Caco-2 (cell line): ENCODE measurements at regions of chr11 and their contacts with region 1.

Region 1: GRCh38 chr11:129815596-129816461 is at the start of gene TMEM45B:
- DNase-seq: peak; percentile 83 to 86
- H3K4me3 ChIP-seq: peak within 1 kb of the TSS; percentile 69
- H3K4me3 Mint-ChIP-seq: peak within 1 kb of the TSS; percentile 98
- H3K27ac Mint-ChIP-seq: peak within 1 kb of the TSS; percentile 97
- H3K4me1 ChIP-seq: peaks cover 25% of the 10 kb centered on the region
- H3K4me1 Mint-ChIP-seq: peaks cover 47% of the 10 kb centered on the region
- H3K27me3 ChIP-seq: no peaks in the 10 kb centered on the region
- H3K27me3 Mint-ChIP-seq: no peaks in the 10 kb centered on the region
- CTCF ChIP-seq: no peak
- total RNA-seq, gene TMEM45B: 58.2 and 60.0 TPM in 2 replicates

Region 2: DNA sequence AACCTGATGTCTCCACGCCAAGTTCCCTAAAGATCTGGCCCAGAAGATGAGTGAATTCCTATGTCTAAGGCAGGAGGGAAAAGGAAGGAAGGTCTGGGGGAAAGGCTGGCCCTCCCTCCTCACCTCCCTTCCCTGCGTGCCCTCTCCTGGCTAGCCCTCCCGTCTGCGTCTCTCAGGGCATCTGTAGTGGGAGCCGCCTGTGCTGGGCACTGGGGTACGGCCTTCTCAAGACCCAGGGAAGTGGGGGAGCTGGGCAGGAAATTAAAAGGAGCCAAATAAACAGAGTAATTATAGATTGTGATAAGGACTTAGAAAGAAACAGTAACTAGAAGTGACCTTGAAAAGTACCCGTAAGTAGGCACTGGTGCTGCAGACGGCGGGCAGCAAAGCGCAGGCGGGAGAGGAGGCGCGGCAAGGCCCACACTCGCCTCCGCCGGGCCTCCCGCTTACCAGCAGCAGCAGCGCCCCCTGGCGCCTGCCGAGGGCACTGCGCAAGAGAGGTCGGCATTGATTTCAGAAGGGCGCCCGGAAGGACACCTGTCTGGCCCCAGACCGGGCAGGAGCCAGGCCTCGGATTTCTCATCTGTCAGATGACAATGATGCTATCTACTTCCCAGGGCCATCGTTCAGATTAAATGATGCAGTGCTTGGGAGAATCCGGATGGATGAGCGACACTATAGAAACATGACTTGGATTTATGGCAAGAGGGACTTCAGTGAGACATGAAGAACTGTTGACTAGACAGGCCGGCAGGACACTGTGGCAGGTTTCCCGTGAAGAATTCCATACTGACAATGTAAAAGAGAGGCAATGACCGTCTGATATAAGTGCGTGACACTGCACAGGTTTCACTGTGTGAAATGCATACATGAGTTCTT is 956.0 kb before region 1 on chr11:
- CTCF ChIA-PET with region 1: no interaction called
- POLR2A ChIA-PET with region 1: no interaction called
- intact Hi-C with region 1: no loop called
- DNase-seq: peak; percentile 65 to 80
- H3K4me3 ChIP-seq: no peak overlapping the region
- H3K4me3 Mint-ChIP-seq: no peak overlapping the region
- H3K27ac Mint-ChIP-seq: no peak overlapping the region
- H3K4me1 ChIP-seq: no peaks in the 10 kb centered on the region
- H3K4me1 Mint-ChIP-seq: no peaks in the 10 kb centered on the region
- H3K27me3 ChIP-seq: peaks cover under 1% of the 10 kb centered on the region; the same call in 1 of the 2 replicates
- H3K27me3 Mint-ChIP-seq: peaks cover 34% of the 10 kb centered on the region
- CTCF ChIP-seq: peak; percentile 91 to 97

Region 3: GRCh38 chr11:129779342-129779741 is 36.5 kb before region 1 on chr11:
- CTCF ChIA-PET with region 1: interaction called, 8 read pairs
- POLR2A ChIA-PET with region 1: interaction called, 28 read pairs
- intact Hi-C with region 1: loop called (anchors 5 kb)
- DNase-seq: peak; percentile 76 to 79
- H3K4me3 ChIP-seq: peak overlapping the region; percentile 11; the same call in 1 of the 2 replicates
- H3K4me3 Mint-ChIP-seq: peak overlapping the region; percentile 71
- H3K27ac Mint-ChIP-seq: peak overlapping the region; percentile 90
- H3K4me1 ChIP-seq: peaks cover 33% of the 10 kb centered on the region
- H3K4me1 Mint-ChIP-seq: peaks cover 30% of the 10 kb centered on the region
- H3K27me3 ChIP-seq: no peaks in the 10 kb centered on the region
- H3K27me3 Mint-ChIP-seq: no peaks in the 10 kb centered on the region
- CTCF ChIP-seq: no peak

Region 4: DNA sequence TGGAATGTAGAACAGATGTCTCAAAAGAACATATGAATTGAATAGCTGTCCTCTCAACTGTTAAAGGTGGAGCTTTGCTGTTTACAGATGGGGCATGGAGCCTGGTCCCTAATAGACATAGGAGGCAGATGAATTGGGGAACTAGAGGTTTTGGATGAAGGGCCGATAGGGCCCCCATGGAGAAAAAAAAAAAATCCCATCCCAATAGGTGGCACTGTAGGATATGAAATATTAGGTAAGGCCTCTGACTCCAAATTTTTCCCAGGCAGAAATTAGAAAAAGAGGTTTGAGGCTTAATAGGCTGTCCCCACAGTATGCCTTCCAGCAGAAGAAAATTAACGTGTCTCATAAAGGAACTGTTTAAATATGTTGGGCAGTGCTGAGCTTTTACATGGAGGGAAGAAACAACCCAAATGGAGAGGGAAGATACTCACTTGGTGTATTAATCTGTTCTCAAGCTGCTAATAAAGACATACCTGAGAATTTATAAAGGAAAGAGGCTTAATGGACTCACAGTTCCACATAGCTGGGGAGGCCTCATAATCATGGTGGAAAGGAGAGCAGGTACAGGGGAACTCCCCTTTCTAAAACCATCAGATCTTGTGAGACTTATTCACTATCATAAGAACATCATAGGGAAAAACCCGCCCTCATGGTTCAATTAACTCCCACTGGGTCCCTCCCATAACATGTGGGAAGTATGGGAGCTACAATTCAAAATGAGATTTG is 30.3 kb before region 1 on chr11:
- CTCF ChIA-PET with region 1: interaction called, 4 read pairs
- POLR2A ChIA-PET with region 1: interaction called, 28 read pairs
- intact Hi-C with region 1: loop called (anchors 1 kb)
- DNase-seq: peak in 1 of 2 experiments; percentile 66
- H3K4me3 ChIP-seq: no peak overlapping the region
- H3K4me3 Mint-ChIP-seq: no peak overlapping the region
- H3K27ac Mint-ChIP-seq: peak overlapping the region; percentile 4
- H3K4me1 ChIP-seq: peaks cover 18% of the 10 kb centered on the region
- H3K4me1 Mint-ChIP-seq: peaks cover 18% of the 10 kb centered on the region
- H3K27me3 ChIP-seq: no peaks in the 10 kb centered on the region
- H3K27me3 Mint-ChIP-seq: no peaks in the 10 kb centered on the region
- CTCF ChIP-seq: peak; percentile 2 to 52

Region 5: DNA sequence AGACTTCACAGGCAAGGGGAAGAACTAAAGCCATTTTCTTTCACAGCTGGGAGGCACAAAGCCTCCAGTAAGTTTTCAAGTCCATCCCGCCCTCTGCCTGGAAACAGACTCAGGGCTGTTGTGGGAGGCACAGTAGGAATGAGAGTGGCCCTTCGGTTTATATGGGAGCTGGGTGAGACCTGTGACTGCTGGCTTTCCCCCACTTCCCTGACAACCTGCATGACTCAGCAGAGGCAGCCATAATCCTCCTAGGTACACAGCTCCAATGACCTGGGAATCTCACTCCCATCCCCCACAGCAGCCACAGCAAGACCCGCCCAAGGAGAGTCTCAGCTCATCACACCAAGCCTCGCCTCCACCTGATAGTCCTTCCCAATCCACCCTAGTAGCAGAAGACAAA is 12.3 kb before region 1 on chr11:
- CTCF ChIA-PET with region 1: interaction called, 6 read pairs
- POLR2A ChIA-PET with region 1: interaction called, 15 read pairs
- intact Hi-C with region 1: loop called (anchors 2 kb)
- DNase-seq: peak; percentile 69 to 92
- H3K4me3 ChIP-seq: no peak overlapping the region
- H3K4me3 Mint-ChIP-seq: peak overlapping the region; percentile 11
- H3K27ac Mint-ChIP-seq: peak overlapping the region; percentile 81
- H3K4me1 ChIP-seq: peaks cover 41% of the 10 kb centered on the region
- H3K4me1 Mint-ChIP-seq: peaks cover 37% of the 10 kb centered on the region
- H3K27me3 ChIP-seq: no peaks in the 10 kb centered on the region
- H3K27me3 Mint-ChIP-seq: no peaks in the 10 kb centered on the region
- CTCF ChIP-seq: no peak

Region 6: DNA sequence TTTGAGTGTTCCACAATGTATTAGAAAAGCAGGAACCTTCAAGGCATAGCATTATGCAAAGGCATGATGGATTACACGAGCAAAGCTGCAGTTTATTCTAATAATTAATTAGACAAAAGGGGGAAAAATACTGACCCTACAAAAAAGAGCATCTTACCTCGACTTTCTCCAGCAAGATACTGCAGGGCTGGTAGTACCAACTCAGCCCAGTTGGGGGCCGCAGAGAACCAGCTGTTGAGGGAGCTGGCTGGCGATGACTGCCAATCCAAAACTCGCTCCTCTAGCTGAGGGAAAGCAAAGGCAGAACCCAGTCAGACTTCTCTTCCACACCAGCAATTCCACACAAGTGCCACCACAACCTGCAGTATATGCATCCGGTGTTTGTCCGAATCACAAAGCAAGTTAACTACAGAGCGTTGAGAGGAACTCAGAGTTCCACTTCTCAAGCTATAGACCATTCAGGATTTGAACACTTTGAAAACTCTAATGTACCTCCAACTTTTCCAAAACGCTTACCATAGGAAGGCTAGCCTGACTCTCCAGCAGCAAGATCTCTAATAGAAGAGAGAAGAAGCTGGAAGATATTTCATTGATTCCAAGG is 65.8 kb after region 1 on chr11:
- CTCF ChIA-PET with region 1: no interaction called
- POLR2A ChIA-PET with region 1: no interaction called
- intact Hi-C with region 1: no loop called
- DNase-seq: peak; percentile 72 to 84
- H3K4me3 ChIP-seq: no peak overlapping the region
- H3K4me3 Mint-ChIP-seq: no peak overlapping the region
- H3K27ac Mint-ChIP-seq: no peak overlapping the region
- H3K4me1 ChIP-seq: no peaks in the 10 kb centered on the region
- H3K4me1 Mint-ChIP-seq: no peaks in the 10 kb centered on the region
- H3K27me3 ChIP-seq: no peaks in the 10 kb centered on the region
- H3K27me3 Mint-ChIP-seq: no peaks in the 10 kb centered on the region
- CTCF ChIP-seq: peak; percentile 94 to 96

Region 7: GRCh38 chr11:129895126-129896041 is 79.6 kb after region 1 on chr11 and contains the start of gene NFRKB:
- CTCF ChIA-PET with region 1: no interaction called
- POLR2A ChIA-PET with region 1: interaction called, 4 read pairs
- intact Hi-C with region 1: loop called (anchors 1 kb)
- DNase-seq: peak; percentile 94 to 98
- H3K4me3 ChIP-seq: peak within 1 kb of the TSS; percentile 86
- H3K4me3 Mint-ChIP-seq: peak within 1 kb of the TSS; percentile 84
- H3K27ac Mint-ChIP-seq: peak within 1 kb of the TSS; percentile 80
- H3K4me1 ChIP-seq: peaks cover 14% of the 10 kb centered on the region
- H3K4me1 Mint-ChIP-seq: peaks cover 13% of the 10 kb centered on the region
- H3K27me3 ChIP-seq: no peaks in the 10 kb centered on the region
- H3K27me3 Mint-ChIP-seq: no peaks in the 10 kb centered on the region
- CTCF ChIP-seq: no peak
- total RNA-seq, gene NFRKB: 101 and 104 TPM in 2 replicates